Naive thymus-derived CD4-positive, alpha-beta T cell (primary cell): ENCODE measurements at regions of chr20 and their contacts with region 1.

Region 1: DNA sequence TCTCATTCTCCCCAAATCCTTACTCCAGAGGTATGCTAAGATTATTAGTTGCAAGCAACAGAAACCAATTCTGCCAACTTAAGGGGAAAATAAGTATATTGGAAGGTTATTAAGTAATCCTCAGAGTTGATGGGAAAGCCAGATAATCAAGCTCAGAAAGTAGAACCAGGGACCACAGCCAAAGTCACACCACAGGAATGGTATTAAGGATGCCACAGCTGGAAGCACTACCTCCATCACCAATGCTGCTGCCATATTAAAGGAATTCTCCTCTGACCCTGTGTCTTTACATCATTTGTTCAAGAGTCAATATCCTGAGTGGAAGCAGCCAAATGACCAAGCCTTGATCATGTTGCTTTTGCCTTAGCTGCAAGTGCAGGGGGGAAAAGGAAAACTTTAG is 9.9 kb downstream of the PROCR start:
- DNase-seq: no peak
- ATAC-seq: no peak
- H3K4me3 ChIP-seq: no peak overlapping the region
- H3K4me3 Mint-ChIP-seq: no peak overlapping the region
- H3K27ac ChIP-seq: no peak overlapping the region
- H3K27ac Mint-ChIP-seq: no peak overlapping the region
- H3K4me1 ChIP-seq: no peaks in the 10 kb centered on the region
- H3K4me1 Mint-ChIP-seq: no peaks in the 10 kb centered on the region
- H3K27me3 ChIP-seq: no peaks in the 10 kb centered on the region
- H3K27me3 Mint-ChIP-seq: peaks cover 0 to 2% (median 0%) of the 10 kb centered on the region in 5 donors

Region 2: GRCh38 chr20:34850969-34851368 is 330.8 kb before region 1 on chr20:
- CTCF ChIA-PET with region 1: no interaction called
- POLR2A ChIA-PET with region 1: interaction called, 10 read pairs
- intact Hi-C with region 1: no loop called
- DNase-seq: no peak
- ATAC-seq: no peak
- H3K4me3 ChIP-seq: no peak overlapping the region
- H3K4me3 Mint-ChIP-seq: no peak overlapping the region
- H3K27ac ChIP-seq: no peak overlapping the region
- H3K27ac Mint-ChIP-seq: no peak overlapping the region
- H3K4me1 ChIP-seq: no peaks in the 10 kb centered on the region
- H3K4me1 Mint-ChIP-seq: peaks cover 0 to 2% (median 0%) of the 10 kb centered on the region in 7 donors
- H3K27me3 ChIP-seq: no peaks in the 10 kb centered on the region
- H3K27me3 Mint-ChIP-seq: no peaks in the 10 kb centered on the region

Region 3: GRCh38 chr20:35129647-35130069 is 52.1 kb before region 1 on chr20:
- CTCF ChIA-PET with region 1: no interaction called
- POLR2A ChIA-PET with region 1: no interaction called
- intact Hi-C with region 1: no loop called
- DNase-seq: no peak
- ATAC-seq: no peak
- H3K4me3 ChIP-seq: no peak overlapping the region
- H3K4me3 Mint-ChIP-seq: no peak overlapping the region
- H3K27ac ChIP-seq: no peak overlapping the region
- H3K27ac Mint-ChIP-seq: peak overlapping the region in 1 of 9 donors; percentile 59
- H3K4me1 ChIP-seq: no peaks in the 10 kb centered on the region
- H3K4me1 Mint-ChIP-seq: peaks cover 0 to 2% (median 0%) of the 10 kb centered on the region in 7 donors
- H3K27me3 ChIP-seq: no peaks in the 10 kb centered on the region
- H3K27me3 Mint-ChIP-seq: no peaks in the 10 kb centered on the region